ENCODE measurements at regions of chr15 and their contacts with region 1.

Region 1: DNA sequence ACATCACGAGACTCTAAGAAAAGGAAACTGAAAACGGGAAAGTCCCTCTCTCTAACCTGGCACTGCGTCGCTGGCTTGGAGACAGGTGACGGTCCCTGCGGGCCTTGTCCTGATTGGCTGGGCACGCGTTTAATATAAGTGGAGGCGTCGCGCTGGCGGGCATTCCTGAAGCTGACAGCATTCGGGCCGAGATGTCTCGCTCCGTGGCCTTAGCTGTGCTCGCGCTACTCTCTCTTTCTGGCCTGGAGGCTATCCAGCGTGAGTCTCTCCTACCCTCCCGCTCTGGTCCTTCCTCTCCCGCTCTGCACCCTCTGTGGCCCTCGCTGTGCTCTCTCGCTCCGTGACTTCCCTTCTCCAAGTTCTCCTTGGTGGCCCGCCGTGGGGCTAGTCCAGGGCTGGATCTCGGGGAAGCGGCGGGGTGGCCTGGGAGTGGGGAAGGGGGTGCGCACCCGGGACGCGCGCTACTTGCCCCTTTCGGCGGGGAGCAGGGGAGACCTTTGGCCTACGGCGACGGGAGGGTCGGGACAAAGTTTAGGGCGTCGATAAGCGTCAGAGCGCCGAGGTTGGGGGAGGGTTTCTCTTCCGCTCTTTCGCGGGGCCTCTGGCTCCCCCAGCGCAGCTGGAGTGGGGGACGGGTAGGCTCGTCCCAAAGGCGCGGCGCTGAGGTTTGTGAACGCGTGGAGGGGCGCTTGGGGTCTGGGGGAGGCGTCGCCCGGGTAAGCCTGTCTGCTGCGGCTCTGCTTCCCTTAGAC is at the start of gene B2M:
- DNase-seq: peak; percentile 96
- H3K4me3 Mint-ChIP-seq: peak within 1 kb of the TSS; percentile 99
- H3K27ac Mint-ChIP-seq: peak within 1 kb of the TSS; percentile 100
- H3K4me1 Mint-ChIP-seq: peaks cover 37% of the 10 kb centered on the region
- H3K27me3 Mint-ChIP-seq: peaks cover 3% of the 10 kb centered on the region
- total RNA-seq, gene B2M: 5,387 to 5,703 TPM

Region 2: GRCh38 chr15:44286814-44287452 is 424.6 kb before region 1 on chr15:
- CTCF ChIA-PET with region 1: no interaction called
- intact Hi-C with region 1: loop called (anchors 2 kb)
- DNase-seq: no peak
- H3K4me3 Mint-ChIP-seq: peak overlapping the region; percentile 88
- H3K27ac Mint-ChIP-seq: peak overlapping the region; percentile 94
- H3K4me1 Mint-ChIP-seq: peaks cover 36% of the 10 kb centered on the region
- H3K27me3 Mint-ChIP-seq: no peaks in the 10 kb centered on the region

Region 3: GRCh38 chr15:44633603-44634002 is 77.9 kb before region 1 on chr15:
- CTCF ChIA-PET with region 1: interaction called, 6 read pairs
- intact Hi-C with region 1: loop called (anchors 1 kb)
- DNase-seq: peak; percentile 34
- H3K4me3 Mint-ChIP-seq: peak overlapping the region; percentile 65
- H3K27ac Mint-ChIP-seq: peak overlapping the region; percentile 98
- H3K4me1 Mint-ChIP-seq: peaks cover 34% of the 10 kb centered on the region
- H3K27me3 Mint-ChIP-seq: no peaks in the 10 kb centered on the region

Region 4: GRCh38 chr15:44676676-44677075 is 34.9 kb before region 1 on chr15:
- CTCF ChIA-PET with region 1: interaction called, 12 read pairs
- intact Hi-C with region 1: loop called (anchors 1 kb)
- DNase-seq: peak; percentile 66
- H3K4me3 Mint-ChIP-seq: peak overlapping the region; percentile 55
- H3K27ac Mint-ChIP-seq: peak overlapping the region; percentile 86
- H3K4me1 Mint-ChIP-seq: peaks cover 81% of the 10 kb centered on the region
- H3K27me3 Mint-ChIP-seq: no peaks in the 10 kb centered on the region

Region 5: DNA sequence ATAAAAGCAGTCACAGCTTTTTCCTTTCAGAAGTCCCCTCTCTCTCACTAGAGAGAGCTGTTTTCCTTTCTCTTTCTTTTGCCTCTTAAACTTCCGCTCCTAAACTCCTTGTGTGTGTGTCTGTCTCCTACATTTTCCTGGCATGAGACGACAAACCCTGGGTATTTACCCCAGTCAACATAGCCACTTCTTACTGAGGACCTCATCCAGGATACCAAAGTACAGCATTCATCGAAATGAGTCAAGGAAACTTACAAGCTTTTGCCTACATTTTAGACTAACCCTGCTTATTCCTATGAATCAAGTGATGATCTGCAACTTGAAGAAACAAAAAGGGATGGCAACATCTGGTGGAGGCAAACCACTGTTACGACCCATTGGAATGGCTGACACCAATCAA is 17.1 kb before region 1 on chr15:
- CTCF ChIA-PET with region 1: interaction called, 5 read pairs
- intact Hi-C with region 1: loop called (anchors 2 kb)
- DNase-seq: no peak
- H3K4me3 Mint-ChIP-seq: no peak overlapping the region
- H3K27ac Mint-ChIP-seq: no peak overlapping the region
- H3K4me1 Mint-ChIP-seq: peaks cover 19% of the 10 kb centered on the region
- H3K27me3 Mint-ChIP-seq: no peaks in the 10 kb centered on the region

Region 6: GRCh38 chr15:44738340-44738984 is 26.9 kb after region 1 on chr15:
- CTCF ChIA-PET with region 1: interaction called, 128 read pairs
- intact Hi-C with region 1: loop called (anchors 1 kb)
- DNase-seq: no peak
- H3K4me3 Mint-ChIP-seq: peak overlapping the region; percentile 12
- H3K27ac Mint-ChIP-seq: peak overlapping the region; percentile 78
- H3K4me1 Mint-ChIP-seq: peaks cover 51% of the 10 kb centered on the region
- H3K27me3 Mint-ChIP-seq: no peaks in the 10 kb centered on the region

Region 7: DNA sequence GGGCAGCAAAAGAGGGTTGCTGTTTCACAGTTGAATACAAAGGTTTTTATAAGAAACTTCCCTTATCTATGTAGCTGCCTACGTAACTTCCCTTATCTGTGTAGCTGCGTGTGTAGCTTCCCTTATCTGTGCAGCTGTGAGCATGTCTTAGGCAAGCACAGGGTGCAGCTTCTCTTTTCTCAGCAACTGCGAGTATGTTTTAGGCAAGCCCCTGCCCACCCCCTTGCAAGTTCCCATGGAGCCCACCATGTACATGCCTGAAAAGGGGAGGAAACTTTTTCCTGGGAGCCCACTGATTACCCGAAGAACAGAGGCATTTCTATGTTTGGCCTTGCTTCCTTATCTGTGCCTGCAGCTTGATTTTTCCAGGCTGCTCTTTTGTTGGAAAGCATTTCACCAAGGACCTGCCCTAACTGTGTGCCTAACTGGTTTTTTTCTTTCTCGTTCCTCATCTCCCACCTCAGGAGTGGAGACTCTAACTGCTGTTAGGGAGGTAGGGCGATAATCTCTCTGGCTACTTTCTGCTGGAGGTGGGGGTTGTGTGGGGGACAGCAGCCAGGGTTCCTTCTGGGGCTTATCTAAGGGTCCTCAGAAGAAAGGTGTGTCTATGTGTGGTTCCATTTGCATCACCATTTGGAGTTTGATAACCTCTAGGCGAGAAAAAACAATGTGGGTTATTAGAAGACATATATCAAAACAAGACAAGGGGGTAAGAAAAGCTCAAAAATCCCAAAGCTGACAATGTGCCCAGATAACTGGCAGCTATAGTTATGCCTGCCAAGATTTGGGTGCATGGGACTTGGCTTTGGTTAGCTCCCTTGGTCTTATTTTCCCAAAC is 337.5 kb after region 1 on chr15:
- CTCF ChIA-PET with region 1: no interaction called
- intact Hi-C with region 1: no loop called
- DNase-seq: no peak
- H3K4me3 Mint-ChIP-seq: no peak overlapping the region
- H3K27ac Mint-ChIP-seq: no peak overlapping the region
- H3K4me1 Mint-ChIP-seq: no peaks in the 10 kb centered on the region
- H3K27me3 Mint-ChIP-seq: no peaks in the 10 kb centered on the region